Sigmoid colon (tissue), 7 donors: ENCODE measurements at regions of chr2 and their contacts with region 1.

Region 1: DNA sequence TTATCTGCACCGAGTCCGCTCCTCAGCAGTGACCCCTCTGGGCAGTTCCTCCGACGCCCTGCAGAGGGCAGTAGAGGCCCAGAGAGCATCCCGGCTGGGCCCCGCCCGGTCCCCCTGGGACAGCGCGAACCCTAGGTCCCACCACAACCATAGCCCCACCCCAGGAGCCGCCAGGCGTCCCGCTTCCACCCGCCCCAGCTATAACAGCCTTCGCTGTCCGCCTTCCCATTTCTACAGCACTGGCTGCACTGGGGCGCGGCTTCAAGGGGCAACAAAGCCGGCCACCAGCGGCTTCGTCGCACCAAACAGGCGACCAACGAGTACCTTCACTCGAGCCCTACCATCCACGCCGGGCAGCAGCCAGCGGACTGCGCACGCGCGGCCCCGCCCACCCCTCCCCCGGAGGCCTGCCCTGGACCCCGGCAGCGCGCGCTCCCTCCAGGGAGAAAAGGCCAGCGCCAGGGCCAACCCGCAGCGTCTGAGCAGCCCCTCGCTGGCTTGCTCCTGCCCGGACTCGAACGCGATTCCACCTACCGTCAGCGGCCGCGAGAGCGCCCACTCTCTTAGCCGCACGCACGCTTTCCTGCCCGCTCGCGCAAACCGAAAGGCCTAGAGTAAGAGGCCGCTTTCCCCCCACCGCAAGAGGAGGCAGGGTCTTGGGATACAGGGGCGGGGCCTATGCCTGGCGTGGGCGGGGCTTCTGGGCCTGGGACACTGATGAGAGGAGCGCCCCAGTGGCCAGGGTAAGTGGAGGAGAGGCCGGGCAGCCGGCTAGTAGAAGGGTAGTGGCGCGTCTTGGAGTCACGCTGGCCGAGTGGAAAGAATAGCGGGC is at the start of gene NHEJ1:
- DNase-seq: peak; percentile 99
- H3K4me3 ChIP-seq: peak within 1 kb of the TSS; percentile 70 to 75 (median 72)
- H3K27ac ChIP-seq: peak within 1 kb of the TSS; percentile 93 to 99 (median 96)
- H3K4me1 ChIP-seq: peaks cover 0 to 13% (median 10%) of the 10 kb centered on the region in 4 donors
- H3K27me3 ChIP-seq: no peaks in the 10 kb centered on the region
- CTCF ChIP-seq: peak; percentile 93 to 100 (median 98)
- EP300 ChIP-seq: no peak
- POLR2A ChIP-seq: peak; percentile 42 to 53
- total RNA-seq, gene NHEJ1: 15.1 to 22.5 (median 18.4) TPM

Region 2: GRCh38 chr2:218701806-218702205 is 458.6 kb before region 1 on chr2:
- intact Hi-C with region 1: no loop called
- DNase-seq: no peak
- H3K4me3 ChIP-seq: no peak overlapping the region
- H3K27ac ChIP-seq: no peak overlapping the region
- H3K4me1 ChIP-seq: no peaks in the 10 kb centered on the region
- H3K27me3 ChIP-seq: no peaks in the 10 kb centered on the region
- CTCF ChIP-seq: no peak
- EP300 ChIP-seq: no peak
- POLR2A ChIP-seq: no peak

Region 3: GRCh38 chr2:219206442-219207253 is 46.2 kb after region 1 on chr2 and contains the start of gene ZFAND2B:
- intact Hi-C with region 1: loop called (anchors 1 kb)
- DNase-seq: peak; percentile 97
- H3K4me3 ChIP-seq: peak within 1 kb of the TSS; percentile 62 to 76 (median 68)
- H3K27ac ChIP-seq: peak within 1 kb of the TSS; percentile 93 to 97 (median 96)
- H3K4me1 ChIP-seq: peaks cover 0 to 22% (median 19%) of the 10 kb centered on the region in 4 donors
- H3K27me3 ChIP-seq: no peaks in the 10 kb centered on the region
- CTCF ChIP-seq: peak in 3 of 4 experiments; percentile 4 to 24 (median 9)
- EP300 ChIP-seq: no peak
- POLR2A ChIP-seq: peak; percentile 90 to 96
- total RNA-seq, gene ZFAND2B: 26.9 to 55.8 (median 45.6) TPM

Region 4: GRCh38 chr2:219218732-219219701 is 58.6 kb after region 1 on chr2 and contains the start of gene ABCB6:
- intact Hi-C with region 1: loop called (anchors 2 kb)
- DNase-seq: peak; percentile 99
- H3K4me3 ChIP-seq: peak within 1 kb of the TSS; percentile 41 to 62 (median 54)
- H3K27ac ChIP-seq: peak within 1 kb of the TSS; percentile 84 to 98 (median 96)
- H3K4me1 ChIP-seq: peaks cover 0 to 37% (median 32%) of the 10 kb centered on the region in 4 donors
- H3K27me3 ChIP-seq: no peaks in the 10 kb centered on the region
- CTCF ChIP-seq: no peak
- EP300 ChIP-seq: no peak
- POLR2A ChIP-seq: peak in 1 of 2 donors; percentile 47
- total RNA-seq, gene ABCB6: 11.8 to 23.0 (median 16.1) TPM

Region 5: DNA sequence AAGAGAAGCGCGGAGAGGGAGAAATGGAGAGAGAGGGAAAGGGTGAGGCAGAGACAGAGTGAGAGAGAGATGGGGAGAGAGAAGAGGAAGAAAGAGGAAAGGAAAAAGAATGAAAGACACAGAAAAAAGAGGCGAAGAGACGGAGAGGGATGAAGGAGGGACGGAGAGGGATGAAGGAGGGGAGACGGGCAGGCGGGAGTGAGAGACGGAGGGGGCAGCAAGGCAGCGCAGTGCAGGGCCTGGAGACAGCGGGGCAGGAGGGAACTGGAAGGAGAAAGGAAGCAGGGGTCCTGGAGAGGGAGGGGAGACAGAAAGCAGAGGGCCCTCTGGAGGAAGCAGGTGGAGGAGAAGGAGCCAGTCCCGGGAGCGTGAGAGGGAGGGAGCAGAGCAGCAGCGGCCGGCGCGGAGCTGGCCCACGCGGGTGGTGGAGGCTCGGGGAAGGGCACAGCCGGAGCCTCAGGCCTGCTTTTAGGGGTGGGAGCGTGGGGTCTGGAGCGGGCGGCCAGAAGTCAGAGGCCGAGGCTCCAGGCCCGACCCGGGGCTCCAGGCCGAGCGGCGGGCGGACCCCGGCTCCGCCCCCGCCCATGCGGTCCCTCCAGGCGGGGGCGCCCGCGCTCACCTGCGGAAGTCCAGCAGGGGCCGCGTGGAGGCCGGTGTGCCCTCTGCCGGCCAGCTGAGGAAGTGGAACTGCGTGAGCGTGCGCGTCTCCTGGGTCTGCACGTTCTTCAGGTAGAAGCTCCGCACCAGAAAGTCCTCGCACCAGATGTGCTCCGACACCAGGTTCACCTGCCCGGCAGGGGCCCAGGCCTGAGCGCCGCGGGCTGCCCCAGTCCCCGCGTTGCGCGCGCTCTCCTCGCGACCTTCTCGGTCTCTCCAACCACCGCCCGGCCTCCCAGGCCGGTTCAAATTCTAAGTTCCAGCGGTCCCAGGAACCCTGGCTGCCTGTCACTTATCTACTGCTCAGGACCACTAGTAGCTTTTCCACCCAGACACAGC is 134.3 kb after region 1 on chr2:
- intact Hi-C with region 1: loop called (anchors 1 kb)
- DNase-seq: peak; percentile 91
- H3K4me3 ChIP-seq: peak overlapping the region; percentile 43 to 65 (median 54)
- H3K27ac ChIP-seq: peak overlapping the region; percentile 84 to 91 (median 90)
- H3K4me1 ChIP-seq: peaks cover 0 to 19% (median 18%) of the 10 kb centered on the region in 4 donors
- H3K27me3 ChIP-seq: peaks cover 0 to 2% (median 2%) of the 10 kb centered on the region in 3 donors
- CTCF ChIP-seq: peak; percentile 85 to 99 (median 91)
- EP300 ChIP-seq: no peak
- POLR2A ChIP-seq: no peak

Region 6: DNA sequence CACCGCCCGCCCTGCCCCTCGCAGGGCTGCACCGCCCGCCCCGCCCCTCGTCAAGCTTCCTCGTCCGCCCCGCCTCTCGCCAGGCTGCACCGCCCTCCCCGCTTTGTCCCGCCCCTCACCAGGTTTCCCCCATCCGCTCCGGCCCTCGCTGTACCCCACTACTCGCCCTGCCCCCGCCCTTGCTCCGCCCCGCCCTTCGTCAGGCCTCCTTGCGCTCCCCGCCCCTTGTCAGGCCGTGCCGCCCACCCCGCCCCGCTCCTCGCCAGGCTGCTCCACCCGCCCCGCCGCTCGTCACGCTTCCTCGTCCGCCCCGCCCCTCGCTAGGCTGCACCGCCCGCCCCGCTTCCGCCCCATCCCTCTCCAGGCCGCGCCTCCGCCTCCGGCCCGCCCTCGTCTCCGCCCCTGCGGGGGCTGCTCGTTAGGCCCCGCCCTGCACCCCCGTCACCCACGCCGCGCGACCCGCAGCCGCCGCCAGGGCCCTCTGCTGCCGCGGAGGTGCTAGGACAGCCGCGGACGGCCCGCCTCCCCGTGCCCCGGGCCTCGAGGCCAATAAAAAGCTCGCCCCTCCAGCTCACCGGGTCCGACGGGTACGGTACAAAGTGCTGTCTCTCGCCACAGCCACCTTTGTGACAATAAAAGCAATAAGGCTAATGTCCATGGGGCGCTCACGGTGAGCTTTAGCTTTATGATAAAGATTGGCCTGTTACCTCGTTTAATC is 227.9 kb after region 1 on chr2:
- intact Hi-C with region 1: loop called (anchors 5 kb)
- DNase-seq: peak; percentile 100
- H3K4me3 ChIP-seq: peak overlapping the region; percentile 16 to 88 (median 84)
- H3K27ac ChIP-seq: peak overlapping the region; percentile 94 to 97 (median 96)
- H3K4me1 ChIP-seq: peaks cover 0 to 32% (median 26%) of the 10 kb centered on the region in 4 donors
- H3K27me3 ChIP-seq: no peaks in the 10 kb centered on the region
- CTCF ChIP-seq: peak; percentile 35 to 68 (median 48)
- EP300 ChIP-seq: no peak
- POLR2A ChIP-seq: no peak